Lower lobe of right lung (tissue), 2 donors: ENCODE measurements at regions of chrX and their contacts with region 1.

Region 1: DNA sequence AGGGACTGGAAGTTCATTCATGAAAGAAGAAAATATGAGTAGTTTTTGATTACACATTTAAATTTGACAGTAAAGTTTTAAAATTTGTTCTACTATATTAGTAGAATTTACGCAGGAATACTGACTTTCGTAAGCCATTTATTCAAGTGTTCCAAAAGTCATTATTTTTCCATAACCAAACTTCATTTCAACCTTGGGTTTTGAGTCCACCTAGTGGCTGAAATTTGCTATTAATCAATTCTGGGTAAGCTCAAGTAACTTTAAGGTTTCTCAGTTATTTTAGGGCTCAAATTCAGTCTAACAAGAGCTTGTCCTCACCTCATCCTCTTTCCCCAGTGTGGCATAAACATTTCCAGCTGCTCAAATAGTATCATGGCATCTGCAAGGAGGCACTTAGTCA is 175.4 kb downstream of the SH3BGRL start:
- DNase-seq: no peak
- ATAC-seq: no peak
- H3K4me3 ChIP-seq: no peak overlapping the region
- H3K27ac ChIP-seq: no peak overlapping the region
- H3K4me1 ChIP-seq: no peaks in the 10 kb centered on the region
- H3K27me3 ChIP-seq: no peaks in the 10 kb centered on the region
- CTCF ChIP-seq: peak; percentile 48

Region 2: DNA sequence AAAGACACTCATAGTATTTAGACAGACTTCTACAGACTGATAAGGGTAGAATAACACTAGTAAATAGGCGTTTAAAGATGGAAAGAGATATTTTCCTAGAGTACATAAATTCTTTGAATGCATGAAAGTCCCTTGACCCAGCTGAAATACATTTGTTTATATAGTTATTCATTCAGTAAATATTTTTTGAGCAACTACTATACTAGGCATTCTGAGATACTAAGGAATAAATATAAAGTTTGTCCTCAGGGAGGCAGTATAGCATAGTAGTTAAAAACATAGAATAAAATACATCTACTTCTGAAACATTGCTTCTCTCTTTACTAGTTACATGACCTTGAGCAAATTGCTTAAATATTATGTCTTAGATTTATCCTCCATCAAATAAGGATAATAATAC is 203.0 kb before region 1 on chrX:
- intact Hi-C with region 1: loop called (anchors 10 kb)
- DNase-seq: no peak
- ATAC-seq: no peak
- H3K4me3 ChIP-seq: no peak overlapping the region
- H3K27ac ChIP-seq: no peak overlapping the region
- H3K4me1 ChIP-seq: no peaks in the 10 kb centered on the region
- H3K27me3 ChIP-seq: no peaks in the 10 kb centered on the region
- CTCF ChIP-seq: peak; percentile 27

Region 3: GRCh38 chrX:81308086-81308829 is 69.1 kb before region 1 on chrX:
- intact Hi-C with region 1: no loop called
- DNase-seq: no peak
- ATAC-seq: no peak
- H3K4me3 ChIP-seq: no peak overlapping the region
- H3K27ac ChIP-seq: no peak overlapping the region
- H3K4me1 ChIP-seq: no peaks in the 10 kb centered on the region
- H3K27me3 ChIP-seq: no peaks in the 10 kb centered on the region
- CTCF ChIP-seq: no peak

Region 4: DNA sequence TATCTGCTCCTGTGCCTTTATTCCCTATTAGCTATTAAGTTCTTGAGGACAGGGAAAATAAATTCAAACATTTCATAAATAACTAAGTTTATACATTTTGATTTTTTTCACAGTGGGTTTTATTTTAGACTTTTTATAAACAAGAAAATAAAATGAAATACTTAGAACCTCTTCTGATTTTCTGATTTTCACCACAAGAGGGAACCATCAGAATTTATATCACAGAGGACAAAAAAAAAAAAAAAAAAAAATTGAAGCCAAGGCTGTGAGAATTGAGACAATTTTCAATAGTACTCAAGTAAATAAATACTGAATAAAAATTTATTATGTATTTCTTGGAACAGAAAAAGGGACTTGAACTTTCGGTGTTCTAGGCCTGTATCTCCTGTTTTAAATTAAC is 112.7 kb after region 1 on chrX:
- intact Hi-C with region 1: no loop called
- DNase-seq: no peak
- ATAC-seq: no peak
- H3K4me3 ChIP-seq: no peak overlapping the region
- H3K27ac ChIP-seq: no peak overlapping the region
- H3K4me1 ChIP-seq: no peaks in the 10 kb centered on the region
- H3K27me3 ChIP-seq: no peaks in the 10 kb centered on the region
- CTCF ChIP-seq: no peak